Transverse colon (tissue), 4 donors: ENCODE measurements at regions of chr12 and their contacts with region 1.

Region 1: GRCh38 chr12:95494888-95495287 is 20.9 kb downstream of the METAP2 start:
- DNase-seq: no peak
- H3K4me3 ChIP-seq: no peak overlapping the region
- H3K27ac ChIP-seq: no peak overlapping the region
- H3K4me1 ChIP-seq: no peaks in the 10 kb centered on the region
- H3K27me3 ChIP-seq: no peaks in the 10 kb centered on the region
- CTCF ChIP-seq: no peak
- EP300 ChIP-seq: no peak
- POLR2A ChIP-seq: no peak

Region 2: GRCh38 chr12:95516757-95517156 is 21.9 kb after region 1 on chr12:
- in situ Hi-C with region 1: no loop called
- intact Hi-C with region 1: no loop called
- DNase-seq: no peak
- H3K4me3 ChIP-seq: no peak overlapping the region
- H3K27ac ChIP-seq: no peak overlapping the region
- H3K4me1 ChIP-seq: no peaks in the 10 kb centered on the region
- H3K27me3 ChIP-seq: no peaks in the 10 kb centered on the region
- CTCF ChIP-seq: no peak
- EP300 ChIP-seq: no peak
- POLR2A ChIP-seq: no peak

Region 3: DNA sequence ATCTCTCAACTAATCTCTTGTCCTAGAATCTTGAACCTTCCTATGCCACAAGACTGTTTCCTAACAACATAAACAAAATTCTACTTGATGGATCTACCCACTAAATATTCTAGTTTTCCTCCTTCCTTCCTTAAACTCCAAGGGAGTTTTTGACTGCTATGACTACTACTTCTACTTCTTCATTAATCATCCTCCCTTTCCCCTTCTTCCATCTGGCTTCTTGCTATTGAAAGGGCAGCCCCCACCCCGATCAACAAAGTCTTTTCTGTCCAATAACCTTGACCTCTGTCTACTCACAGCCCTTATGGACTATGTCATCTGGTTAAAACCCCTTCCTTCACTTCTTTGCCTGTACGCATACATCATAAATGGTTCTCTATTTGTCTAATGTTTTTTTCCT is 534.9 kb after region 1 on chr12:
- in situ Hi-C with region 1: no loop called
- intact Hi-C with region 1: loop called (anchors 5 kb)
- DNase-seq: no peak
- H3K4me3 ChIP-seq: no peak overlapping the region
- H3K27ac ChIP-seq: no peak overlapping the region
- H3K4me1 ChIP-seq: peaks cover 9 to 26% (median 14%) of the 10 kb centered on the region in 4 donors
- H3K27me3 ChIP-seq: no peaks in the 10 kb centered on the region
- CTCF ChIP-seq: no peak
- EP300 ChIP-seq: no peak
- POLR2A ChIP-seq: no peak